ENCODE measurements at regions of chr10 and their contacts with region 1.

Region 1: GRCh38 chr10:77165445-77166208 is 472.0 kb downstream of the KCNMA1 start:
- DNase-seq: peak; percentile 68

Region 2: GRCh38 chr10:77207828-77208185 is 42.2 kb after region 1 on chr10:
- CTCF ChIA-PET with region 1: no interaction called
- POLR2A ChIA-PET with region 1: no interaction called
- DNase-seq: no peak

Region 3: DNA sequence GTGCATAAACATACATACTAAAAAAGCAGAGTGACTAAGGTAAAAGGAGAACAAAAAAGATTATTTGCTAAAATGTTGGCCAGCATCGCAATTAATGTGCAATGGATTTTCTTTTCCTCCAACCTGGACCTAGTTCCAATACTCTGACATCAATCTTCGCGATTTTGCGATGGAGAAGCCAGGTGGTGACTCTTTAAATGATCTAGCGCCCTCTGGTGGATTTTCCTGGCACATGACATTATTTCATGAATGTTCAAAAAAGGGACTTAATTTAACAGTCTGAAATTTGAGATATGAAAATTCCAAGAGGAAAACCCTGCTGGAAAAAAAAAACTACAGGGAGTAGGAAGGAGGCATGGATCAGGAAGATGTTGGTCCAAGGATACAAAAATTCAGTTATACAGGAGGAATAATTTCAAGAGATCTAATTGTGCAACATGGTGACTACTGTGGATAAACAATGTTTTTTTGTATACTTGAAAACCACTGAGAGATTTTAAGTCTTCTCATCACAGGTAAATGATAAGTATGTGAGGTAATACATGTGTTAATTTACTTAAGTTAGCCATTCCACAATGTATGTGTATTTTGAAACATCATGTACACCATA is 476.3 kb after region 1 on chr10:
- CTCF ChIA-PET with region 1: interaction called, 27 read pairs
- POLR2A ChIA-PET with region 1: no interaction called
- DNase-seq: peak; percentile 59